ENCODE measurements at regions of chr4 and their contacts with region 1.

Region 1: DNA sequence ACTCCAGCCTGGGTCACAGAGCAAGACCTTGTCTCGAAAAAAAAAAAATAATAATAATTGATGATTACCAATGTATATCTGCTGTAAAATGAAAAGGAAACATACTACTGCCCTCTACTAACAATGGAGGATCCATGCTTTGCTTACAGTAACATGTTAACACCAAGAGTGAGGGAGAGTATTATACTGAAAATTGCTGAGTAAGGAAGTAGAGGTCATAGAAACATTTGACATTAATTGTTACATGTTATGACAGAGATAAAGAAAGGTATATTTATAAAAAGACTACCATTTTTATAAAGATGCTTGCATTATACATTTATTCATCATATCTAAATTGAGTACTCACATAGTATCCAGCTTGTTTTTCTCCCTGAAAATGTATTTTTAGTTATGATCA is 1989.8 kb upstream of the TENM3 start:
- DNase-seq: no peak
- H3K4me3 ChIP-seq: no peak overlapping the region
- H3K27ac ChIP-seq: no peak overlapping the region
- H3K4me1 ChIP-seq: no peaks in the 10 kb centered on the region
- H3K27me3 ChIP-seq: no peaks in the 10 kb centered on the region
- CTCF ChIP-seq: no peak

Region 2: DNA sequence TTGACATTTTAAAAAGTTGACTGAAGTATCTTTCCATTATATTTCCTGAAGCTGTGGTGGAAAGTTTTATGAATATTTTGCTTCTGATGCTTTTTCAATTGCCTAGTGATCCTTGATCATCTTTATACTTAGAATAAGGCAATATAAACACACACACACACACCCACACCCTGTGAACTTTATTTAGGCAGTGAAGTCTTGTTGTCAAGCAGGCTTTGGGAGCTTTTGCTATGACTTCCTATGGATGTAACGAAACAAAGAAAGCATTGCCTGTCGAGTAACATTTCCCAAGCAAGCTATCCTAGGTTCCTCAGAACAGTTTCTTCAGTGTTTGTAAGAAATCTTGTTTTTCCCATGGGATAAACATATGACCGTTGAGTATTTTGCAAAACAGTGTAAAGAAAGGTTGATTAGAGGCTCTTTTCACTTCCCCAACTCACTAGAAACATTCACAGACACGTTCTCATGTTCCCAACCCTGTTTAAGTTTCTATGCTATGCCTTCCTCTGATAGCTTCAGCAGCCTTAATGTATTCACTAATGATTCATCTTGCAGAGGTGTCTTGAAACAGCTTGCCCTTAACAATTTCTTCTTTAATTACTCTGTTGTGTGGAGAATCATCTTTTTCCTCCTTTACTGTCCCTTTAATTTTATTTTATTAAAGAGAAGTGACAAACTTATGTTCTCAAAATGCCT is 42.6 kb after region 1 on chr4:
- CTCF ChIA-PET with region 1: no interaction called
- POLR2A ChIA-PET with region 1: no interaction called
- intact Hi-C with region 1: no loop called
- DNase-seq: no peak
- H3K4me3 ChIP-seq: no peak overlapping the region
- H3K27ac ChIP-seq: no peak overlapping the region
- H3K4me1 ChIP-seq: no peaks in the 10 kb centered on the region
- H3K27me3 ChIP-seq: no peaks in the 10 kb centered on the region
- CTCF ChIP-seq: no peak

Region 3: GRCh38 chr4:180449395-180449956 is 196.1 kb after region 1 on chr4:
- CTCF ChIA-PET with region 1: no interaction called
- POLR2A ChIA-PET with region 1: interaction called, 11 read pairs
- intact Hi-C with region 1: no loop called
- DNase-seq: peak in 1 of 2 experiments; percentile 31
- H3K4me3 ChIP-seq: no peak overlapping the region
- H3K27ac ChIP-seq: no peak overlapping the region
- H3K4me1 ChIP-seq: no peaks in the 10 kb centered on the region
- H3K27me3 ChIP-seq: no peaks in the 10 kb centered on the region
- CTCF ChIP-seq: peak; percentile 40